HCT116 (cell line): ENCODE measurements at regions of chr1 and their contacts with region 1.

Region 1: DNA sequence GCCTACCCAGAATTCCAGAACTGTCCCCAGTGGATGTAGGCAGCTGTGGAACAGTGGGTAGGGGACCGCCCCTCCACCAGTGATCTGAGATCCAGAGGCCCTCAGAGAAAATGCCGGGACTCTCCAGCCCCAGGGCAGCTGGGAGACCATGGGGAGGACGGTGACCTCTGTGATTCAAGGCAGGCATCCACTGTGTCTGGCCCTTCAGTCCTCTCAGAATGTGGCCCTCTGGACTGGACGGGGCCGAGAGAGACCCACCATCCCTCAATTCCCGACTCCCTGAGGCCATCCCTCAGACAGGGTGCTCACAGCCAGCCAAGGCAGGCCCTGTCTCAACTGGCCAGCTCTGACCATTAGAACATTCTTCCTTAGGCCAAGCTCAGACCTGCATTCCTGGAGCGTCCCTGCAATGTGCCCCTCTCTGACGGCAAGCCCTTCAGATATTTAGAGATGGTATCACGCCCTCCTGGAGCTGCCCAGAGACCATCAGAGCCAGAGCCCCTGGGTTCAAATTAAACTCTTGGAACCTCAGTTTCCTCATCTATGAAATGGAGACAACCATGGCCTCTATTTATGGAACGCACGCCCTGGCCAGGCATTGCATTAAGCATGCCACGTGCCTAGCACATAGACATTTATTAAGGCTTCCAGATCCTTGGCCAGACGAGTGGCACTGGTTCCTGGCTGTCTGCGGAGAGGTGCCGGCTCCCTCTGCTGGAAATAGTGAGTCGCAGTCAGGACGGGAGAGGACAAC is 9.6 kb upstream of the EPS8L3 start:
- DNase-seq: peak; percentile 70
- ATAC-seq: peak; percentile 92
- H3K4me3 ChIP-seq: no peak overlapping the region
- H3K27ac ChIP-seq: no peak overlapping the region
- H3K4me1 ChIP-seq: peaks cover 0 to 18% of the 10 kb centered on the region in 2 experiments; a peak in 2 of 4 replicates
- H3K27me3 ChIP-seq: no peaks in the 10 kb centered on the region
- CTCF ChIP-seq: peak; percentile 85 to 97 (median 92)
- POLR2A ChIP-seq: no peak
- RAD21 ChIP-seq: peak; percentile 99

Region 2: DNA sequence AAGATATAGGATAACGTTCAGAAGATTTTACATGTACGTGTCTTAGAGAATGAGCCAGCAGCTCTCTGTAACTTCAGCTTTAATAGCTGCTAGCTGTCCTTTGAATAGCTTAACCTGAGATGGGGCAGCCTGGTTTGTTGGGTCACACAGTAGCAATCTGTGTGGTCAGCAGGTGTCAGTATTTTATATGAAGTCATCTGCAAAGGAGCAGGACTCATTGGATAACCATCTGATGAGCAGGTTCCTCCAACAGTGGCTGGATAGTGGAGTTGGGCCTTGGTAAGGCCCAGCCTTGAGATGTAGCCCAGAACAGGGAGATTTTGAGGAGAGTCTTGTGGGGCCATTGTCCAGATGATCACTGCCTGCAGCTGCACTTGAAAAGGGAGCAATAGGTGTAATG is 54.8 kb before region 1 on chr1:
- CTCF ChIA-PET with region 1: interaction called, 10 read pairs
- POLR2A ChIA-PET with region 1: no interaction called
- RAD21 ChIA-PET with region 1: interaction called in 1 of 2 experiments, 3 read pairs
- intact Hi-C with region 1: loop called (anchors 1 kb)
- DNase-seq: peak; percentile 44
- ATAC-seq: peak; percentile 95
- H3K4me3 ChIP-seq: no peak overlapping the region
- H3K27ac ChIP-seq: no peak overlapping the region
- H3K4me1 ChIP-seq: peaks cover 0 to 14% of the 10 kb centered on the region in 2 experiments; a peak in 2 of 4 replicates
- H3K27me3 ChIP-seq: no peaks in the 10 kb centered on the region
- CTCF ChIP-seq: peak in 2 of 3 experiments; percentile 15 to 58; a peak in 3 of 6 replicates
- POLR2A ChIP-seq: no peak
- RAD21 ChIP-seq: peak; percentile 74

Region 3: DNA sequence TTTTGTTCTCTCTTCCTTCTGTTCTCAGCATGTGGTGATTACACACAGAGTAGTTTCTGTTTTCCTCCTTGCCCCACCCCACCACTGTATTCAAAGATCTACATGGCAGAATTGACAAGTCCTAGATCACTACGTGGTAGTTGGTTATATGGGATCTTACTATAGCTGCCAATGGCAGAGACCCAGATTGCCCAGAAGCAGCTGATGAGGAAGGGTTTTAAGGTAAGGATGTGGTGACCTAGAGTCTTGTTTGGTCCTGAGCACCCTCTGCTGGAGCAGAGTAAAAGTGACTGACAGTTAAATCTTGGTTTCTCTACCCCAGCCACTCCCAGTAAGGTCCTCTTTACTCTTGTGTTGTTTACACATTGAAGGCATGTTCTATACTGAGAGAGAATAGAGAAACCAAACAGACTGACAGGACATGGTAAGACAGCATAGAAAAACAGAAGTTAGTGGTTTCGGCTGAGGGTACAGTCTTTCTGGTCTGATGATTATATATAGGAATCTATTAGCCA is 238.3 kb after region 1 on chr1:
- CTCF ChIA-PET with region 1: interaction called, 10 read pairs
- POLR2A ChIA-PET with region 1: no interaction called
- RAD21 ChIA-PET with region 1: no interaction called
- intact Hi-C with region 1: loop called (anchors 1 kb)
- DNase-seq: peak; percentile 39
- ATAC-seq: peak; percentile 98
- H3K4me3 ChIP-seq: no peak overlapping the region
- H3K27ac ChIP-seq: no peak overlapping the region
- H3K4me1 ChIP-seq: no peaks in the 10 kb centered on the region
- H3K27me3 ChIP-seq: no peaks in the 10 kb centered on the region
- CTCF ChIP-seq: peak; percentile 31 to 66 (median 55); a peak in 5 of 6 replicates
- POLR2A ChIP-seq: no peak
- RAD21 ChIP-seq: peak; percentile 69